Left colon (tissue), 2 donors: ENCODE measurements at regions of chr17 and their contacts with region 1.

Region 1: GRCh38 chr17:60036796-60037612 is 41.7 kb downstream of the HEATR6 start:
- DNase-seq: peak; percentile 38 to 77
- ATAC-seq: peak; percentile 95

Region 2: GRCh38 chr17:59746849-59747445 is 290.1 kb before region 1 on chr17:
- intact Hi-C with region 1: loop called in 1 of 2 experiments (anchors 10 kb)
- DNase-seq: no peak
- ATAC-seq: peak; percentile 51

Region 3: GRCh38 chr17:59901604-59902003 is 135.4 kb before region 1 on chr17:
- intact Hi-C with region 1: no loop called
- DNase-seq: no peak
- ATAC-seq: no peak

Region 4: GRCh38 chr17:59914274-59914854 is 122.6 kb before region 1 on chr17:
- intact Hi-C with region 1: loop called in 1 of 2 experiments (anchors 5 kb)
- DNase-seq: no peak
- ATAC-seq: peak; percentile 52

Region 5: DNA sequence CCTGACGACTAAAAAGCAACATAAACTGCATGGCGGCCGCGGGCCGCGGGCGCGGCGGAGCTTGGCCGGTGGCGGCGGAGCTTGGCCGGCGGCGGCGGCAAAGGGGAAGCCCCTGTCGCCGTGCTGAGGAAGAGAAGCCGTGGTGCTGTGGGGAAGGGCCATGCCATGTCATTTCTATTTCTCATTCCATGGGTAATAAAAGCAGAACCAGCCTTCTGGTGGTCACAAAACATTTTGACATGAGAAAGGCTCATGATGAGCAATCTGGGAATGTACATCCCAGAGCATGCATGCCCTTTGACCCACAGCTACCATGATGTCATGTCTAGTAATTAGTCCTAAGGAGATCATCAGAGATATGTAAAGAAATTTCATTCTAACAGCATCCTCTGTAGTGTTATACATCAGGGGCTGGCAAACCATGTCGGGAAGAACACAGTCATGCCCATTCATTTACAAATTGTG is 65.7 kb after region 1 on chr17:
- intact Hi-C with region 1: no loop called
- DNase-seq: peak in 1 of 2 donors; percentile 39
- ATAC-seq: peak; percentile 83